GM10248 (cell line): ENCODE measurements at regions of chr5 and their contacts with region 1.

Region 1: GRCh38 chr5:170120576-170120975 is 14.9 kb downstream of the FOXI1 start:
- DNase-seq: no peak
- CTCF ChIP-seq: no peak

Region 2: GRCh38 chr5:170087168-170087817 is 33.3 kb before region 1 on chr5:
- CTCF ChIA-PET with region 1: no interaction called
- POLR2A ChIA-PET with region 1: no interaction called
- DNase-seq: no peak
- CTCF ChIP-seq: no peak

Region 3: DNA sequence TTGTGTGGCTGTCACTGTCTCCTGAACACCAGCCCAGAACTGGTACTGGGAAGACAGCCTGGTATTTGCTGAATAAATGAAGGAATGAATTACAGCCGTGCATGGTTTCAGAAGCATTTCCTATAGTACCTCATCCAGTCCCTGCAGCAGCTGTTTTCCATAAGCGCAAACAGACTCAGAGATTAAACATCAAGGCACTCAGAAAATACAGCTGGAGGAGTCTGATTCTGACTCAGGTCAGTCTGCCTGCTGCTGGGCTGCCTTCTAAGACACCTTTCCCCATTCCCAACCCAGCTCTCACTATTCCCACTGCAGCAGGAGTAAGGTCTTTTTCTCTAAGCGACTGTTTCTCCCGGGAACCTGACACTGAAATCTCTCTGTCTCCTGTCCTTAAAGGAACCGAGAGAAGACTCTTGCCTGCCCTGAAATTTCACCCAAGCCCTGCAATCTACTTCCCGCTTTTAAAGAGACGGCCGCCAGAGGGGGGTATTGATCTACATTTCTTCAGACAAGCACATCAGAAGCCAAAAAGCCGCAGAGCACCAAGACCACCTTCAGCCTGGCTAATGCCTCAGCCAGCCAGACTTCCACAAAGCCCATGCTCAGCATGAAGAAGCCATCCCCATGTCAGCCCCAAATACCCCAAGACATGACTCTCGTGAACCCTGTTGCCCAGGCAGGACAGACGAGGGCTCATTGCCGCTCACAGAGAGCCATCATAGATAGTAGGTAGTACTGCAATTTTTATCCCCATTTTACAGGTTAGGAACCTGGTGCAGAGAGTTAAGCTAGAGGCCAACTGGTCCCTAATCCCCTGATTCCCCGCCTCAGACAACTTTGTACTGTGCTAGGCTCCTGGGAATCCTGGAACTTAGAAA is 20.3 kb before region 1 on chr5:
- CTCF ChIA-PET with region 1: interaction called, 19 read pairs
- POLR2A ChIA-PET with region 1: no interaction called
- DNase-seq: peak; percentile 64
- CTCF ChIP-seq: peak; percentile 60

Region 4: DNA sequence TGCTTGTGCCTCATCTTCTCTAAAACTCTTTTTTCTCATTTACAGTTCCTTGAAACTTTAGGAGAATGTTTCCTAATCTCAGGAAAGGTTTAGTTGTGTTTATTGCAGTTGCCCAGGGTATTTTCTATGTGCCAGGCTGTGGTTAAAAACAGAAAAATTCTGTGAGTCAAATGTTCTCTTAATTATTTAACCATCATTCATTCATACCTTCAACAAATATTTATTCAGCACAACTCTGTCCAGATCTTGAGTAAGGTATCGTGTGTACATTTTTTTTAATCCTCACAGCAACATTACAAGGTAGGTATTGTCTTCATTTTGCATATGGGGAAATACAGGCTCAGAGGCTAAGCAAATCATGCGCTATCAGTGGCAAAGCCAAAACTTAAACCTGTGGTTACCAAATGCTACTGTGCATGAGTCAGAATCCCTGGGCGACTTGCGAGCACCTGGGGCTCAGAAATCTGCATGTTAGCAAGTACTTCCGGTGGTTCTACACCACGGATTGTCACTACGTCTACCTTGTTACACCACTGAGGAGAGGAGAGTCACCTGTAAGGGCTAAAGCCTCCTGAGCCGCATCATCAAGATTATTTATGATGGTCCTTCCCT is 133.4 kb after region 1 on chr5:
- CTCF ChIA-PET with region 1: no interaction called
- POLR2A ChIA-PET with region 1: no interaction called
- DNase-seq: peak; percentile 60
- CTCF ChIP-seq: no peak